ENCODE measurements at regions of chr9 and their contacts with region 1.

Region 1: GRCh38 chr9:6353851-6354686 is 25.9 kb downstream of the TPD52L3 start:
- DNase-seq: peak in 1 of 2 donors; percentile 77
- ATAC-seq: peak; percentile 77 to 95 (median 86)
- H3K4me3 ChIP-seq: no peak overlapping the region
- H3K4me3 Mint-ChIP-seq: no peak overlapping the region
- H3K27ac ChIP-seq: no peak overlapping the region
- H3K27ac Mint-ChIP-seq: no peak overlapping the region
- H3K4me1 ChIP-seq: no peaks in the 10 kb centered on the region
- H3K4me1 Mint-ChIP-seq: peaks cover 0 to 5% of the 10 kb centered on the region in 2 donors
- H3K27me3 ChIP-seq: no peaks in the 10 kb centered on the region
- H3K27me3 Mint-ChIP-seq: peaks cover 8 to 12% of the 10 kb centered on the region in 2 donors
- CTCF ChIP-seq: peak; percentile 82

Region 2: DNA sequence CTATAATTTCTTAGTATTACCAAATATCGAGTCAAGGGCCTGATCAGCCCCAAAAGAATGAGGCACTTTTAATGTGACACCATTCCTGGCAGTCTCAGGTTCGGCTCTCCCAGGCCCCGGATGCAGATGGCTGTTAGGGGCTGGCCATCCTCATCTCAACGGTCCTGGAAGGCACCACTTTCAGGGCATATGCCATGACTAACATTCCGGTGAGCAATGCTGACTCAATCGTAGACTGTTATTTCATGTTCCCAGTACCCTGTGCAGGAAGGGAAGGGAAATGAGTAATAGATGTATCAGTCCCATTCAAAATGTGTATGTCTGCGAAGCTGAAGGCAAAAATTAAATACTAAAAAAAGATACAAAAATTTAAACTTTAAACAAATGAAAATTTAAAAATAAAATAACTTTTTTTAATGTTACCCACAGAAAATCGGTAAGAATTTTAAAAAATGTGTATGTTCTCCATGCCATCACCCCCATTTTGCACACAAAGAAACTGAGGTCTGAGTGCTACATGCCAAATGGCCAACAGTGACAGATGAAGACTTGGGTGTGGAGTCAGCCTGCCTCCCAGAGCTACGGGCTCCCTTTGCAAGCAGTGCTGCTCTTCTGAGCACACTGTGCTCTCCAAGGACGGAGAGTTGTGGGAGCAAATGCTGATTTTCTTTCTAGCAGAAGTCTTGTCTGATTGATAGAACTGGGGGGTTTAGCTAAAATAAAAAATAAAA is 212.5 kb after region 1 on chr9:
- intact Hi-C with region 1: loop called (anchors 1 kb)
- DNase-seq: no peak
- ATAC-seq: no peak
- H3K4me3 ChIP-seq: no peak overlapping the region
- H3K4me3 Mint-ChIP-seq: no peak overlapping the region
- H3K27ac ChIP-seq: no peak overlapping the region
- H3K27ac Mint-ChIP-seq: no peak overlapping the region
- H3K4me1 ChIP-seq: no peaks in the 10 kb centered on the region
- H3K4me1 Mint-ChIP-seq: no peaks in the 10 kb centered on the region
- H3K27me3 ChIP-seq: no peaks in the 10 kb centered on the region
- H3K27me3 Mint-ChIP-seq: peaks cover 0 to 7% of the 10 kb centered on the region in 2 donors
- CTCF ChIP-seq: no peak